CD8-positive, alpha-beta memory T cell (primary cell): ENCODE measurements at regions of chr13 and their contacts with region 1.

Region 1: DNA sequence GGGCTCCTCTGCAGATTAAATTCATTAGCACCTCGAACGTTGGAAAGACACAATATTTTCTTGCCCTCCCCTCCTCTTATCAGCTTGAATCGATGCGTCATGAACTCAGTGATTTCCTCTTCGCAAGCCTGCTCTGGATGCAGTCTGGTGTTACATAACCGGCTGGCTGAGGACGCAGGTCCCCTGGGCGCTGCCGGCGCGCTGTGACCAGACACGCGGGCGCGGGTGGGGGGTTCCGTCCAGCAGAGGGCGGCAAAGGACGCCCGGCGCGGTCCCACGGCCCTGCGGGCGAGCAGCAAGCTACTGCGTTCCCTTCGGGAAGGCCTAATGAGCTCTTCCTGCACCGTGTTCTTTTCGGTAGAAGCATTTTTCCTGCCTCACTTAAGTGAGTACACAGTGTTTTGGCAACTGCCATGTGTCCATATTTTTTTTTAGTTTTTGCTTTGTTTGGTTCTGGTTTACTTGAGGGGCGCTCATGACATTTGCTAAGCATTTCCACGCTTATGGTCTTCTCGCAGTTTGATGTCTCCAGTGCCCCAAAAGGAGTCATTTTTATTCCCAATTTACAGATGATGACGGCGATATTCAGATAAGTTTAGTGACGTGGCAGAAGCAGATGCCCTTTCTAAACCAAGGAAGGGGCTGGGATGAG is 112.2 kb upstream of the MBNL2 start:
- DNase-seq: peak; percentile 69 to 79 (median 71)
- H3K4me3 ChIP-seq: no peak overlapping the region
- H3K4me3 Mint-ChIP-seq: peak overlapping the region in 4 of 7 donors; percentile 39 to 62 (median 44)
- H3K27ac ChIP-seq: no peak overlapping the region
- H3K27ac Mint-ChIP-seq: peak overlapping the region in 5 of 8 donors; percentile 58 to 93 (median 78)
- H3K4me1 ChIP-seq: no peaks in the 10 kb centered on the region
- H3K4me1 Mint-ChIP-seq: peaks cover 12 to 17% (median 14%) of the 10 kb centered on the region in 3 donors
- H3K27me3 ChIP-seq: no peaks in the 10 kb centered on the region
- H3K27me3 Mint-ChIP-seq: peaks cover 5 to 8% of the 10 kb centered on the region in 2 donors

Region 2: DNA sequence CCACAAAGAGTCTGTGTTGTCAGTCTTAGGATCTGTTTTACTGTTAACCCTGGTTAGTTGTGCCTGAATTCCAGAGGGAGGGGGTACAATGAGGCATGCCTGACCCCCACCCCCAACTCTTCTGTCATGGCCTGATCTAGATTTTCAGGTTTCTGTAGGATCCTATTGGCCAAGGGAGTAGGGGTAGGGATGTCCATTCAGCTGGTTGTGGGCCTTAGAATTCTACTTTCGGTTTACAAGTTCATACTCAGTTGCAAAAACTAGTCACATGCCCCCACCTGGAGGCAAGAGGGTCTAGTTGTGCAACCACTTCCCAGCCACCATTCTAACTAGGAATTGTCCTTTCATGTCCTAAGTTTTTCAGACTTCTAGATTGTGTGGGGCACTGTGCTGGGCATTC is 17.9 kb after region 1 on chr13:
- CTCF ChIA-PET with region 1: interaction called, 29 read pairs
- POLR2A ChIA-PET with region 1: interaction called, 3 read pairs
- DNase-seq: no peak
- H3K4me3 ChIP-seq: no peak overlapping the region
- H3K4me3 Mint-ChIP-seq: no peak overlapping the region
- H3K27ac ChIP-seq: no peak overlapping the region
- H3K27ac Mint-ChIP-seq: no peak overlapping the region
- H3K4me1 ChIP-seq: no peaks in the 10 kb centered on the region
- H3K4me1 Mint-ChIP-seq: peaks cover 0 to 5% (median 4%) of the 10 kb centered on the region in 3 donors
- H3K27me3 ChIP-seq: no peaks in the 10 kb centered on the region
- H3K27me3 Mint-ChIP-seq: peaks cover 24 to 34% of the 10 kb centered on the region in 2 donors

Region 3: GRCh38 chr13:97221989-97222700 is 112.2 kb after region 1 on chr13 and contains the start of gene MBNL2:
- CTCF ChIA-PET with region 1: interaction called, 23 read pairs
- POLR2A ChIA-PET with region 1: no interaction called
- DNase-seq: peak; percentile 75 to 87 (median 79)
- H3K4me3 ChIP-seq: peak within 1 kb of the TSS; percentile 73
- H3K4me3 Mint-ChIP-seq: peak within 1 kb of the TSS; percentile 87 to 97 (median 93)
- H3K27ac ChIP-seq: peak within 1 kb of the TSS; percentile 78
- H3K27ac Mint-ChIP-seq: peak within 1 kb of the TSS; percentile 94 to 99 (median 98)
- H3K4me1 ChIP-seq: peaks cover 36% of the 10 kb centered on the region
- H3K4me1 Mint-ChIP-seq: peaks cover 35 to 47% (median 44%) of the 10 kb centered on the region in 3 donors
- H3K27me3 ChIP-seq: no peaks in the 10 kb centered on the region
- H3K27me3 Mint-ChIP-seq: peaks cover 0 to 2% of the 10 kb centered on the region in 2 donors
- total RNA-seq, gene MBNL2: 17.7 to 17.8 TPM

Region 4: GRCh38 chr13:97344265-97345175 is 234.6 kb after region 1 on chr13:
- CTCF ChIA-PET with region 1: interaction called, 64 read pairs
- POLR2A ChIA-PET with region 1: no interaction called
- DNase-seq: peak; percentile 9 to 56 (median 12)
- H3K4me3 ChIP-seq: no peak overlapping the region
- H3K4me3 Mint-ChIP-seq: no peak overlapping the region
- H3K27ac ChIP-seq: no peak overlapping the region
- H3K27ac Mint-ChIP-seq: peak overlapping the region in 1 of 8 donors; percentile 23
- H3K4me1 ChIP-seq: no peaks in the 10 kb centered on the region
- H3K4me1 Mint-ChIP-seq: peaks cover 9 to 16% (median 12%) of the 10 kb centered on the region in 3 donors
- H3K27me3 ChIP-seq: no peaks in the 10 kb centered on the region
- H3K27me3 Mint-ChIP-seq: no peaks in the 10 kb centered on the region

Region 5: DNA sequence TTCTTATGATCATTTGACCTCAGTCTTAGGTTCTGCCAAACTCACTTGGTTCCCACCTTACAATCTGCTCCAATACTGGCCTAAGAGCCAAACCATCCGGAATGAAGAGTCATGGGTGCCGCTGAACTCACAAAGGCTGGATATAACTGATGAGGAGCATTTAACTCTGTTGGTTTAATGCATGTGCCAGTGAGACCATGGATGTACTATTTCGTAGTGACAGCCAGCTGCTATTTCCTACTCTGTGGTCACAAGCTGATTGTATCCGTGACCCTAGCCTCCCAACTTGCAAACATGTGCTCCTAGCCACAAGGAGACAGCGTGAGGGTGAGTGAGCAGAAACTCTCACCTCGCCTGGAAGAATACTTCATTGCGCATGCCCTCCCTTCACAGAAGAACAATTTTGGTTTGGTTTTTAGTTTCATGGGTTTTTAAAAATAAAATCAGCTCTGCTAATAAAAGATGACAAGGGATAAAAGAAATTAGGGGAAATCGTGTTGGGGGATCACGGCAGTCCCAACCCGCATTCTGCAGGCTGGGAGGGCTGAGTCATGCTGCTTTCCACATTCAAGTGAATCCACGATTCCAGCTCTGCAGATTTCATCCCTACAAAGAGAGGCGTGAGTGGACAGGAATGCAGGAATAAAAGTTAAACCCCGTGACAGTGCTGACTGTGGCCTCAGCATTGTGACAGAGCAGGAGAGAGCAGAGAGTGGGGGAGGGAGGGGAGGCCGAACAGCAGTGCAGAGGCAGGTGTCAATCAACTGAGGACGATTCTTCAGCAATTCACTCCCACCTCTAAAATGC is 257.3 kb after region 1 on chr13:
- CTCF ChIA-PET with region 1: interaction called, 20 read pairs
- POLR2A ChIA-PET with region 1: interaction called, 3 read pairs
- DNase-seq: no peak
- H3K4me3 ChIP-seq: no peak overlapping the region
- H3K4me3 Mint-ChIP-seq: peak overlapping the region in 3 of 7 donors; percentile 18 to 88 (median 29)
- H3K27ac ChIP-seq: no peak overlapping the region
- H3K27ac Mint-ChIP-seq: peak overlapping the region; percentile 21 to 93 (median 78)
- H3K4me1 ChIP-seq: peaks cover 5% of the 10 kb centered on the region
- H3K4me1 Mint-ChIP-seq: peaks cover 13 to 24% (median 22%) of the 10 kb centered on the region in 3 donors
- H3K27me3 ChIP-seq: no peaks in the 10 kb centered on the region
- H3K27me3 Mint-ChIP-seq: no peaks in the 10 kb centered on the region